ENCODE measurements at regions of chr7 and their contacts with region 1.

Region 1: GRCh38 chr7:18059171-18059570 is 31.5 kb upstream of the PRPS1L1 start:
- DNase-seq: no peak
- H3K4me3 ChIP-seq: no peak overlapping the region
- H3K27ac ChIP-seq: no peak overlapping the region
- H3K4me1 ChIP-seq: no peaks in the 10 kb centered on the region
- H3K27me3 ChIP-seq: no peaks in the 10 kb centered on the region
- CTCF ChIP-seq: no peak

Region 2: DNA sequence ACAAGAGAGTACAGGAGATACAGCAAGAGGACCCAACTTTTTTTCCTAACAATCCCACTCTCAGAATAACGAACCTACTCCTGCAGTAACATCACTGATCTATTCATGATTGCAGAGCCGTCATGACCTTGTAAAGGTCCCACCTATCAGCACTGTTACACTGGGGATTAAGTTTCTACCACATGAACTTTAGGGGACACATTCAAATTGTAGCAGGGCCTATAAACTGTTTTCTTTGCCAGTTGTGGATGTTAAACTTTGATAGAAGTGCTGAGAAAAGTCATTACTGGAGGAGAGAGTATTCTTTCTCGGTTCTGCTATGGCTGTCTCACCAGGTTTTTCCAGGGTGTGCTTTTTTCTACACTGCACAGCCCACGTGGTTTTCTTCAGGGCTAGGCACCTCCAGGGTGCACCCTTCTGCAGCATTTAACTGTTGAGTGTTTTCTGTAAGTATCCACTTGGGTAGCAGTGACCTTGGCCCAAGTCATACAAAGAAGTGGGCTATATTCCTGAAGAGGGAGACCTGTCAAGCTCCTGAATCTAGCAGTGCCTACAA is 892.3 kb before region 1 on chr7:
- CTCF ChIA-PET with region 1: no interaction called
- POLR2A ChIA-PET with region 1: interaction called, 11 read pairs
- intact Hi-C with region 1: no loop called
- DNase-seq: no peak
- H3K4me3 ChIP-seq: no peak overlapping the region
- H3K27ac ChIP-seq: no peak overlapping the region
- H3K4me1 ChIP-seq: no peaks in the 10 kb centered on the region
- H3K27me3 ChIP-seq: no peaks in the 10 kb centered on the region
- CTCF ChIP-seq: no peak

Region 3: GRCh38 chr7:18096087-18096486 is 36.9 kb after region 1 on chr7:
- CTCF ChIA-PET with region 1: no interaction called
- POLR2A ChIA-PET with region 1: no interaction called
- intact Hi-C with region 1: no loop called
- DNase-seq: no peak
- H3K4me3 ChIP-seq: no peak overlapping the region
- H3K27ac ChIP-seq: no peak overlapping the region
- H3K4me1 ChIP-seq: peaks cover 5% of the 10 kb centered on the region; the same call in 1 of the 2 replicates
- H3K27me3 ChIP-seq: no peaks in the 10 kb centered on the region
- CTCF ChIP-seq: no peak

Measured in PC-9 (cell line).